ENCODE measurements at regions of chr22 and their contacts with region 1.

Region 1: GRCh38 chr22:23984430-23984829 is 4.5 kb downstream of the GSTT2 start:
- DNase-seq: peak; percentile 38
- ATAC-seq: peak; percentile 55
- H3K4me3 ChIP-seq: no peak overlapping the region
- H3K27ac ChIP-seq: no peak overlapping the region
- H3K4me1 ChIP-seq: no peaks in the 10 kb centered on the region
- H3K27me3 ChIP-seq: no peaks in the 10 kb centered on the region
- CTCF ChIP-seq: peak; percentile 77
- POLR2A ChIP-seq: no peak
- RAD21 ChIP-seq: peak; percentile 86

Region 2: GRCh38 chr22:24175160-24175808 is 190.9 kb after region 1 on chr22:
- CTCF ChIA-PET with region 1: no interaction called
- POLR2A ChIA-PET with region 1: no interaction called
- dilution Hi-C with region 1: no loop called
- in situ Hi-C with region 1: no loop called
- intact Hi-C with region 1: loop called (anchors 10 kb)
- DNase-seq: peak; percentile 72
- ATAC-seq: peak; percentile 90
- H3K4me3 ChIP-seq: no peak overlapping the region
- H3K27ac ChIP-seq: no peak overlapping the region
- H3K4me1 ChIP-seq: no peaks in the 10 kb centered on the region
- H3K27me3 ChIP-seq: no peaks in the 10 kb centered on the region
- CTCF ChIP-seq: peak; percentile 89
- POLR2A ChIP-seq: no peak
- RAD21 ChIP-seq: peak; percentile 92

Measured in IMR-90 (cell line).